ENCODE measurements at regions of chr19 and their contacts with region 1.

Region 1: DNA sequence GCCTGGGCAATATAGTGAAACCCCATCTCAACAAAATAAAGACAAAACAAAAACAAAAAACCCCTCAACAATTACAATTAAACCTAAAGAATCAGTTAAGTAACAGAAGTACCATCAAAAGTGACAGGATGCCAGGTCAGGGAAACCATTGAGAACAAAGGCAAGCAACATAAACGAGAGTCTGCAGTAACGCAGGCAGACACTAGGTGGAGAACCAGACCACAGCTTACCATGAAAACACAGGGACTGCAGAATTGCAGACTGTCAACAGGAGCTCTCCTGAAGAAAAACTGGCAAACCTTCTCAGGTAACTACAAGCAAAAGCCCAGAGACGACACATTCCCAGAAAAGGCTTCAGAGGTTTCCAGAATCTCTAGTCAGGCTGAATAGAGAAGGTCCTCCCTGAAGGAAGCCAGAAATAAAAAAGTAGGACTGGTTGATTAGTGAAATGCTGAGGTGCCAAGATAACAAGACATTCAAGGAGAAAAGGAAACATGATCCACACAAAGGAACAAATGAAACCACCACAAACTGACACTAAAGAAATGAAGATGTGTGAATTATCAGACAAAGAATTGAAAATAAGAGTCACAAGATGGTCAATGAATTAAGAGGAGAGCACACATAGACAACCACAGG is 2.2 kb upstream of the ZNF665 start:
- DNase-seq: peak; percentile 59 to 86 (median 78)
- H3K4me3 ChIP-seq: no peak overlapping the region
- H3K27ac ChIP-seq: no peak overlapping the region
- H3K4me1 ChIP-seq: peaks cover 4% of the 10 kb centered on the region
- H3K27me3 ChIP-seq: no peaks in the 10 kb centered on the region
- CTCF ChIP-seq: peak; percentile 74 to 87 (median 83)
- EP300 ChIP-seq: no peak
- POLR2A ChIP-seq: no peak

Region 2: DNA sequence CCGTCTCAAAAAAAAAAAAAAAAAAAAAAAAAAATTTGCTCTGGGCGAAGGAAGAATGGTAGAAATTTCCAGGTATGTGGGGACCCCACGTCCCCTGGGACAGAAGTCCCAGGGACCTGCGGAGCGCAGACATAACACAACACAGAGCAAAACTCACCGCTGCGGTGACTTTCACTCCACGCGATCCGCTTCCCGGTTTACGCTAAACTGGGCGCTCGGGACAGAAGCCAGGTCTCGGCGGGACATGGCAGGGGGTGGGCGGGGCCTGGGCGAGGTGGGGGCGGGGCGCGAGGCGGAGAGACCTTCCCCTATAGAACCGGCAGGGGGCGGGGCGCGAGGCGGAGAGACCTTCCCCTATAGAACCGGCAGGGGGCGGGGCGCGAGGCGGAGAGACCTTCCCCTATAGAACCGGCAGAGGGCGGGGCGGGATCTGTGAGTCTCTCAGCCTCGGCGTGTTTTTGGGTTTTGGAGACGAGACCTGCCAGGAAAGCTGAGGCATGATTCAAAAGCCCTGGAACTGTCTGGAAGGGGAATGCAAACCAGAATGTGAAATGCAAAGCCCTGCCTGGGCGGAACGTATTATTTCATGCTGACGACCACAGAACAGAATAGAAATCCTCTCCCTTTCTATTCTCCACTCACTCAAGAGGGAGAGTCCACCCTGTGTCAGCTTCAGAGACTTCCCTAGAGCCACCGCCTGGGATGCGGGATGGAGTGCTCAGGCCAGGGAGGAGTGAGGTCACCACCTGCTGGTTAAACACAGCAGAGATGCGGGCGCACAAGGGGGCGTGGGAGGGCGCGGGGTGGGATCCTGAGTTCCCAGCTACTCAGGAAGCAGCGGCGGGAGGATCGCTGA is 201.8 kb before region 1 on chr19:
- intact Hi-C with region 1: loop called in 1 of 4 experiments (anchors 5 kb)
- DNase-seq: peak; percentile 80 to 88 (median 84)
- H3K4me3 ChIP-seq: peak overlapping the region; percentile 57
- H3K27ac ChIP-seq: peak overlapping the region in 1 of 2 donors; percentile 73
- H3K4me1 ChIP-seq: peaks cover 2% of the 10 kb centered on the region
- H3K27me3 ChIP-seq: no peaks in the 10 kb centered on the region
- CTCF ChIP-seq: peak; percentile 6 to 77 (median 37)
- EP300 ChIP-seq: no peak
- POLR2A ChIP-seq: no peak

Region 3: DNA sequence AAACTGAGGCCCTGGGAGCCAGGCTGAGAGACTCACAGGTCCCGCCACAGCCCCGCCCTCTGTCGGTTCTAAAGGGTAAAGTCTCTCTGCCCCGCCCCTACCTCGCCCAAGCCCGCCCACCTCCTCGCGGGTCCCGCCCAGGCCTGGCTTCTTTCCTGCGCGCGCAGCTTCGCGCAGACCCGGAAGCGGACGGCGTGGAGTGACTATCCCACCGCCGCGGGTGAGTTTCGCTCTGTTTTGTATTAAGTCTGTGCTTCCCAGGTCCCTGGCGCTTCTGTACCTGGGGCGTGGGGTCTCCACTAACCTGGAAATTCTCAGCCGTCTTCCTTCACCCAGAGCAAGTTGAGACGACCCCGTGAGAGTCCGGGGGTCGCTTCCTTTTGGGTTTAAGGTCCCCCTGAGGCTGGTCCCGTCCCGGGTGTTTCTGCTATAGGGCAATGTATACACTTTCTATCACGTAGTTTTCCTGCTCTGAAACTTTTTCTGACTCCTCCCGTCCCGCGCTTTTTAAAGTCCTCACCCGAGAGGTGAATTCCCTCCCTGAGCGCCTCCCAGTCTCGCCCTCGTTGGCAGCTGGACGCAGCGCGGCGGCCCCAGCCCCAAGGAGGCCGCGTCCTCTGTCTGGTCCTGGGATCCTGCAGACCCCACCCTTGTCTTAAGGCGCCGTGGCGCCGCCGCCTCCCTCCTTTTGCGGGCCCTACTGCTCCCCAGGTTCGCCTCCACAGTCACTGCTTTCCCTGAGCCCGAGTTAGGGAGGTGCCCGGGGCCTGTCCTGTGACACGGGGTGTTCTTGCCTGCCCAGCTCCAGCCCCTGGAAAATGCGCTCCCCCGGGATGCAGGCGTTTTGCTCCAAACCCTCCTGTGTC is 199.8 kb after region 1 on chr19 and contains the start of gene ZNF765:
- intact Hi-C with region 1: loop called in 1 of 4 experiments (anchors 10 kb)
- DNase-seq: peak; percentile 95 to 98 (median 96)
- H3K4me3 ChIP-seq: peak within 1 kb of the TSS; percentile 64
- H3K27ac ChIP-seq: peak within 1 kb of the TSS; percentile 54 to 57
- H3K4me1 ChIP-seq: peaks cover 7% of the 10 kb centered on the region
- H3K27me3 ChIP-seq: no peaks in the 10 kb centered on the region
- CTCF ChIP-seq: peak in 2 of 3 donors; percentile 14 to 70
- EP300 ChIP-seq: no peak
- POLR2A ChIP-seq: peak; percentile 53
- total RNA-seq, gene ZNF765: 9.2 to 27.9 (median 21.8) TPM

Region 4: DNA sequence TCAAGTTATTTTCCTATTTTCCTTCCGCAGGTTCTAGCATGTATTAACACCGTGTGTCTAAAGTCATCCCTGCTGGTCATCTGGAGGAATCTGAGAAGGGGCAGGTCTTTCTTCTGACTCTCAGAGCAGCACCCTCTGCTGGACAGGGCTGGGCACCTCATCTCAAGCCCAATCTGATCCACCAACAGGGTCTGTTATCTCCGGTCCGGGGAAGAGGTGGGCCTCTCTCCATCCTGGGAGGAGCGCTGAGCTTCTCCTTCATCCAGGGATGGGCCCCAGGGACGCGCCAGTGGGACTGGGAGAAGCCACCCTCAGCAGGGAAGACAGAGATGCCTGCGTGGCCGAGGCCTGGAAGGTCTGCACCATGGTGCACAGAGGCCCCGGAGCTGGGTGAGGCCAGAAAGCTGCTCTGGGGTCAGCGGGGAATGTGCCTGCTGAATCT is 316.6 kb after region 1 on chr19:
- intact Hi-C with region 1: loop called in 1 of 4 experiments (anchors 10 kb)
- DNase-seq: peak in 4 of 5 donors; percentile 52 to 68 (median 59)
- H3K4me3 ChIP-seq: no peak overlapping the region
- H3K27ac ChIP-seq: no peak overlapping the region
- H3K4me1 ChIP-seq: no peaks in the 10 kb centered on the region
- H3K27me3 ChIP-seq: no peaks in the 10 kb centered on the region
- CTCF ChIP-seq: peak in 2 of 3 donors; percentile 42 to 54
- EP300 ChIP-seq: no peak
- POLR2A ChIP-seq: no peak

Region 5: GRCh38 chr19:53864308-53864836 is 669.0 kb after region 1 on chr19:
- intact Hi-C with region 1: loop called in 1 of 4 experiments (anchors 5 kb)
- DNase-seq: no peak
- H3K4me3 ChIP-seq: no peak overlapping the region
- H3K27ac ChIP-seq: no peak overlapping the region
- H3K4me1 ChIP-seq: peaks cover 4% of the 10 kb centered on the region
- H3K27me3 ChIP-seq: no peaks in the 10 kb centered on the region
- CTCF ChIP-seq: no peak
- EP300 ChIP-seq: no peak
- POLR2A ChIP-seq: no peak

Region 6: GRCh38 chr19:54023191-54023590 is 827.8 kb after region 1 on chr19:
- intact Hi-C with region 1: loop called in 1 of 4 experiments (anchors 5 kb)
- DNase-seq: no peak
- H3K4me3 ChIP-seq: no peak overlapping the region
- H3K27ac ChIP-seq: no peak overlapping the region
- H3K4me1 ChIP-seq: no peaks in the 10 kb centered on the region
- H3K27me3 ChIP-seq: no peaks in the 10 kb centered on the region
- CTCF ChIP-seq: no peak
- EP300 ChIP-seq: no peak
- POLR2A ChIP-seq: no peak